ENCODE measurements at regions of chr9 and their contacts with region 1.

Region 1: GRCh38 chr9:108761655-108762347 is 94.0 kb downstream of the ACTL7B start:
- DNase-seq: peak; percentile 53

Region 2: GRCh38 chr9:108478431-108478837 is 283.4 kb before region 1 on chr9:
- in situ Hi-C with region 1: loop called (anchors 25 kb)
- DNase-seq: peak; percentile 45

Region 3: DNA sequence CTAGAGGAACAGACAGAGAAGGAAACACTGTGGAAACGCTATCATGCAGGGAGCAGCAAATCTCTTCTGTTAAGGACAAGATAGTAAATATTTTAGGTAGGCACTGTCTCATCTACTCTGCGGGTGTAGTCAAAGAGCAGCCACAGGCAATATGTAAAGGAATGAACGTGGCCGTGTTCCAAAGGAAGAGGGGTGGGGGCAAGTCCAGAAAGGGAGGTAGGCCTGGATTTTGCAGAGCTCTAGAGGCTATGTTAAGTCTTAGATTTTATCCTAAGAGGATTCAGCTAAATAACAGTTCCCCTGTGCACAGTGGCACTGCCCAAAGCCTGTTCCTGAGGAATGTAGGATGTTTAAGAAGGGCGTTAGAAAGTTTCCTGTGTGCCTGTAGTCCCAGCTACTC is 67.6 kb before region 1 on chr9:
- in situ Hi-C with region 1: no loop called
- DNase-seq: no peak

Region 4: GRCh38 chr9:109017493-109017892 is 255.7 kb after region 1 on chr9:
- in situ Hi-C with region 1: no loop called
- DNase-seq: no peak

Region 5: DNA sequence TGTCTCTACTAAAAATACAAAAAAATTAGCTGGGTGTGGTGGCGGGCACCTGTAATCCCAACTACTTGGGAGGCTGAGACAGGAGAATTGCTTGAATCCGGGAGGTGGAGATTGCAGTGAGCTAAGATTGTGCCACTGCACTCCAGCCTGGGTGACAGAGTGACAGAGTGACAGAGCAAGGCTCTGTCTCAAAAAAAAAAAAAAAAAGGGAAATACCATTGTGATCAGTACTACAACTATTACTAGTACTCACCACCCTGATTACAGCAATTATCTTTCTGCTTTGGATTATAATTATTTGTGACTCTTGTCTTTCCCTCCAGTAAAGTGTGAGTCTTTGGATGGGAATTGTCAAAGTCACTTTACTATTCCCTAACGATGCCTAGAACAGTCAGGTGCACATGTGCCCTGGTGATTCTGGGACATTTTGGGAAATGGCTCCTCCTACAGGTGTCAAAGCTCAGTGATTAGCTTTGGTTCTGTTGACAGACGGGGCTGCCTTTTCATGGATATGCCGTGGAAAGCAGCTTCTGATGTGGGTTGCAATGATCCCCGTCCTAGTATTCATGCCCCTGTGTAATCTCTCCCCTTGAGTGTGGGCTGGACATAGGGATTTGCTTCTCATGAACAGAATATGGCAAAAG is 437.1 kb after region 1 on chr9:
- in situ Hi-C with region 1: no loop called
- DNase-seq: no peak

Measured in Caki2 (cell line).